Activated CD8-positive, alpha-beta memory T cell treated with anti-CD3 and anti-CD28 coated beads, Interleukin-2, amount 10 ng/mL, durations not matched to agents 7 days and 5 days (primary cell): ENCODE measurements at regions of chr1 and their contacts with region 1.

Region 1: DNA sequence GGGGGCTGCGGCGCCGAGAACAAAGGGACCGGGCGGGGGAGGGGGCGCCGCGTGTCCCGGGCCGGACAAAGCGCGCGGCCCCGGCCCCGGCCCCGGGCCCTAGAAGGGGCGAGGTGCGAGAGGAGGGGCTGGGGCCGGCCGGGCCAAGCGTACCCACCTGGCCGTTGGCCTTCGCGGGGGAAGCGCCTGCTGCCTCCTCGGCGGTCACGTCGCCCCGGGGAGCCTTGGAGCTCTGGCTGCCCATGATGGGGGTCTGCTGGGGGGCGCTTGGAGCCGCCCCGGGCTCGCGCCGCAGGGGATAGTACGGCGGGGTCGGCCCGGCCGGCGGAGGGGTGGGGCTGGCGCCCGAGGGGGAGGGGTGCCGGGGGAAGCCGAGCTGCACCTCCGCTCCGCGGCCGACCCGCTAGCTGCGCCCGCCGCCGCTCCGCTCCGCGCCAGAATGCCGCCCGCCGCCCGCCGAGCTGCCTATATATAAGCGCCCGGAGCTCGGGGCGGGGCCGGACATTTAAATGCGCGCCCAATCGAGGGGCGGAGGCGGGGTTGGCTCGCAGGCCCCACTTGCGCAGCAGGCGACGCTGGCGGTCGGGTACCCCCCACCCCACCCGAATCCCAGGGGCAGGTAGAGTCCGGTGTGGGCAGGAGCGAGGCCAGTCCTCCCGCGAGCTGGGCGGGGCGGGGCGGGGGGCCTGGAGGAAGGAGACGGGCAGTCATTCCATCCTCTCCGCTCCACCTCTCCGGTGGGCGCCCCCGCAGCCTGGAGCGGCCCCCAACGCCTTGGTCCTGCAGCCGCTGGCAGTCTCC is at the start of gene MARCKSL1:
- DNase-seq: peak; percentile 81
- ATAC-seq: peak; percentile 73
- H3K4me3 Mint-ChIP-seq: peak within 1 kb of the TSS; percentile 63
- H3K27ac Mint-ChIP-seq: no peak within 1 kb of the TSS
- H3K4me1 Mint-ChIP-seq: peaks cover 34% of the 10 kb centered on the region
- H3K27me3 Mint-ChIP-seq: no peaks in the 10 kb centered on the region
- total RNA-seq, gene MARCKSL1: 11.2 to 11.8 TPM

Region 2: DNA sequence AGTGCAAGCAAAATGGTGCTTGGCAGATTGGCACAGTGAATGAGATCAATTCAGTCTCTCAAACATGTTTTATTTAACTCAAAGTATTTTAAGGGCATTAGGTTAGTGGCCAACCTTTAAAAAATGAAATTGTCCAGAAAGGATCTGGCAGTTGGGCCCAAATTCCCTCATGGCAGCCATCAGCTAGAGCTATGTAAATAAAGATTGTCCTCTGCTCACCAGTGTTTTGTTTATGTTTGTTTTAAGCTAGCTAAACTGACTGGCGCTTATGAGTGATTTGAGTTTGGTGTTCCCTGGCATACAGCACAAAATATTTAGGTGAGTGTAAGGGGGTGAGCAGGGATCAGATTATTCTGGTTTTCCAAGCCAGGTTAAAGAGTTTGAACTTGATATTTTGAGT is 26.0 kb before region 1 on chr1:
- CTCF ChIA-PET with region 1: no interaction called
- DNase-seq: no peak
- ATAC-seq: no peak
- H3K4me3 Mint-ChIP-seq: no peak overlapping the region
- H3K27ac Mint-ChIP-seq: no peak overlapping the region
- H3K4me1 Mint-ChIP-seq: peaks cover 37% of the 10 kb centered on the region
- H3K27me3 Mint-ChIP-seq: no peaks in the 10 kb centered on the region

Region 3: DNA sequence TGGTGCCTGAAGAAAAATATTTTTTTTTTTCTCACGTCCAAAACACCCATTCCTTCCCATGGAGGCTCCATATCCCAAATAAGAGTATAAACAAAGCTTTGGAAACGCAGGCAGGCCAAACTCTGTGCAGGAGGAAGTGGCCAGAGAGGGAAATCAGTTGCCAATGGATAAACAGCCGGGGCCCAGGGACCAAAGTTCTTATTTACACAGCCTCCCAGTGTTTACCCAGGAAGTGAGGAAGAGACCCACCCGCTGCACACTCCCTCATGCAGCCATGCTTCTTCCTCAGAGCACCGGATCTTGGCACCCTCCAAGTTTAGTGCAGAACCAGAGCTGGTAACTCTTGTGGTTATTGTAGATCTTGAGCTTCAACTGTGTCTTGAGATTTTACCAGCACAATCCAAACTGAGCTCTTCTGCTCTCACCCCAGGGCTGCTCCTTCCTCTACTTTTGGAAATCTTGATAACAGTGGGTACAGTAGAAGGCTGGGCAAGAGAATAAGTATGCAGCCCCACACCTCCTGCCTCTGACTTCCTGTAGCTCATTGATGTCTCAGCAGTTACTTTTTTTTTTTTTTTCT is 14.2 kb before region 1 on chr1:
- CTCF ChIA-PET with region 1: interaction called, 27 read pairs
- DNase-seq: no peak
- ATAC-seq: peak; percentile 75
- H3K4me3 Mint-ChIP-seq: no peak overlapping the region
- H3K27ac Mint-ChIP-seq: peak overlapping the region; percentile 78
- H3K4me1 Mint-ChIP-seq: peaks cover 37% of the 10 kb centered on the region
- H3K27me3 Mint-ChIP-seq: no peaks in the 10 kb centered on the region

Region 4: DNA sequence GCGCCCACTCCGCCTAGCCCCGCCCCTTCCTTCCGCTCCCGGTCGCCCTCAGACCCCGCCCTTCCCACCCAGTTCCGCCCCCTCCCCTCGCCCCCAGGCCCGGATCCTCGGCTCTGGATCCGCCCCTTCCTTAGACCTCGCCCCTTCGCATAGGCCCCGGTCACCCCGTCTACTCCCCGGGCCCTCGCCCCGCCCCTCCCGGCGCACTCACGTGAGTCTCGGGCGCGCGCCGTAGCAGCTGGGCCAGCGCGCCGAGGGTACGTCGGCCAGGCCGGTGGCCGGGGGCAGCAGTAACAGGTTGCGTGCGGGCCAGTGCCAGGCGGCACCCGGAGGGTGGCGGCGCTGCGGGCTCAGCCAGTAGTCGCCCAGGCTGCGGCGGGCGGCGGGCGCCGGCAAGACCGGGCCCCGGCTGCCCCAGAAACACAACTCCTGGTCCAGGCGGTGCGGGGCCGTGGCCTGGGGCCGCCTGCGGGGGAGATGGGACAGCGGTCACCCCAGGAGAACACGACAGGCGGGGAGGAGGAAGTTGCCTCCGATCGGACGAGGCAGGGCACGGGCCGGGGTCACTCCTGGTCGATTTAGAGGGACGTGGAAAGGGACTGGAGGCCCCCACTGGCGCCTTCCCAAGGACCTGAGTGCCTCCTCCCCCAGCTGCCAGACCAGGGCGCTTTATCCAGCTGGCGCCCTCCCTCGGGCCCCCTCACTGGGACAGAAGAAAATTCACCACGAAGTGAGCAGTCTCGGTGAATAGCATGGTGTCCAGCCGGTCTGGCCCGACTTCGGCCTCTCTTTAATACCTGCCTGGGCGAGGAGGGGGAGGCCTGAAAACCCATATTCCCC is 15.6 kb after region 1 on chr1:
- CTCF ChIA-PET with region 1: interaction called, 17 read pairs
- DNase-seq: peak; percentile 93
- ATAC-seq: peak; percentile 96
- H3K4me3 Mint-ChIP-seq: peak overlapping the region; percentile 74
- H3K27ac Mint-ChIP-seq: peak overlapping the region; percentile 77
- H3K4me1 Mint-ChIP-seq: peaks cover 35% of the 10 kb centered on the region
- H3K27me3 Mint-ChIP-seq: peaks cover 2% of the 10 kb centered on the region